Endothelial cell of umbilical vein (primary cell): ENCODE measurements at regions of chr2 and their contacts with region 1.

Region 1: GRCh38 chr2:20661067-20661980 is 5.6 kb upstream of the GDF7 start:
- DNase-seq: peak; percentile 80
- H3K4me3 ChIP-seq: no peak overlapping the region
- H3K27ac ChIP-seq: no peak overlapping the region
- H3K4me1 ChIP-seq: peaks cover 8% of the 10 kb centered on the region
- H3K27me3 ChIP-seq: peaks cover 57 to 64% of the 10 kb centered on the region in 2 experiments
- CTCF ChIP-seq: peak; percentile 88 to 92
- POLR2A ChIP-seq: peak; percentile 45

Region 2: GRCh38 chr2:20350753-20351554 is 310.4 kb before region 1 on chr2 and contains the start of gene PUM2:
- CTCF ChIA-PET with region 1: no interaction called
- POLR2A ChIA-PET with region 1: no interaction called
- dilution Hi-C with region 1: no loop called
- intact Hi-C with region 1: no loop called
- DNase-seq: peak; percentile 98
- H3K4me3 ChIP-seq: peak within 1 kb of the TSS; percentile 99 to 100 (median 100)
- H3K27ac ChIP-seq: peak within 1 kb of the TSS; percentile 88
- H3K4me1 ChIP-seq: peaks cover 31% of the 10 kb centered on the region
- H3K27me3 ChIP-seq: no peaks in the 10 kb centered on the region
- CTCF ChIP-seq: no peak
- POLR2A ChIP-seq: peak; percentile 92
- total RNA-seq, gene PUM2: 79.2 and 83.7 TPM in 2 replicates

Region 3: DNA sequence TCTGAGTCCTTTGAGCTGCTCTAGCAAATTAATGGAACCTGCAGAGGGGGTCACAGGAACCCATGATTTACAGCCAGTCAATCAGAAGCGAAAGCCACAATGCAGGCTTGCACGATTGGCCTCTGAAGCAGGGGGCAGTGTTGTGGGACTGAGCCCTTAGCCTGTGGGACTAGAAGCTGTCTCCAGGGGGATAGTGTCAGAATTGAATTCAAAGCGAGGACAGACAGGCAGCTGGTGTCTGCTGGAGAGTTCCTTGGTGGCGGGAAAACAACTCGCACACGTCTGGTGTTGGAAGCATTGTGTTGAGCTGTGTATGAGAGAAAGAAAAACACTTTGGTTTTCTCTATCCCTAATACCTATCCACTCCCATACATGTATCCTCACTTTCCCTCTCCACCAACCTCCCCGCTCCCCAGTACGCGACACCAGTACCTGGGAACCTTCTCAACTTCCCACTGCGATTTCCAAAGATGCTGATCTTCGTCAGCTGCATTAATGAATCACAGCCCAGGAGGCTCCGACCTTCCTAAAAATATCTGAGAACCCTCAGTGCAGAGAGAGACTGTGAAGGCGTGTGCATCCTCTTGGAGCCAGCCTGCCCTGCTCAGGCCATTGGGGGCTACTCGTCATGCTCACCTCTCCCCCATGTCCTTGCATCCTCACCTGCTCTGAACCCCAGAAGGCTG is 98.6 kb before region 1 on chr2:
- CTCF ChIA-PET with region 1: no interaction called
- POLR2A ChIA-PET with region 1: no interaction called
- dilution Hi-C with region 1: no loop called
- intact Hi-C with region 1: no loop called
- DNase-seq: no peak
- H3K4me3 ChIP-seq: no peak overlapping the region
- H3K27ac ChIP-seq: no peak overlapping the region
- H3K4me1 ChIP-seq: peaks cover 20% of the 10 kb centered on the region
- H3K27me3 ChIP-seq: no peaks in the 10 kb centered on the region
- CTCF ChIP-seq: peak in 1 of 2 donors; percentile 18
- POLR2A ChIP-seq: no peak

Region 4: GRCh38 chr2:20650880-20651730 is 10.2 kb before region 1 on chr2 and contains the start of gene HS1BP3:
- CTCF ChIA-PET with region 1: interaction called, 20 read pairs
- POLR2A ChIA-PET with region 1: no interaction called
- dilution Hi-C with region 1: no loop called
- intact Hi-C with region 1: no loop called
- DNase-seq: peak; percentile 77
- H3K4me3 ChIP-seq: peak within 1 kb of the TSS; percentile 50 to 95 (median 75)
- H3K27ac ChIP-seq: peak within 1 kb of the TSS; percentile 64
- H3K4me1 ChIP-seq: peaks cover 10% of the 10 kb centered on the region
- H3K27me3 ChIP-seq: peaks cover 9 to 10% of the 10 kb centered on the region in 2 experiments
- CTCF ChIP-seq: peak; percentile 73 to 96
- POLR2A ChIP-seq: peak; percentile 87
- total RNA-seq, gene HS1BP3: 27.8 and 33.1 TPM in 2 replicates

Region 5: GRCh38 chr2:20755132-20755800 is 93.9 kb after region 1 on chr2:
- CTCF ChIA-PET with region 1: interaction called, 40 read pairs
- POLR2A ChIA-PET with region 1: no interaction called
- dilution Hi-C with region 1: no loop called
- intact Hi-C with region 1: loop called (anchors 2 kb)
- DNase-seq: peak; percentile 52
- H3K4me3 ChIP-seq: no peak overlapping the region
- H3K27ac ChIP-seq: no peak overlapping the region
- H3K4me1 ChIP-seq: no peaks in the 10 kb centered on the region
- H3K27me3 ChIP-seq: no peaks in the 10 kb centered on the region
- CTCF ChIP-seq: peak in 1 of 2 donors; percentile 38
- POLR2A ChIP-seq: no peak

Region 6: GRCh38 chr2:20916604-20917286 is 255.4 kb after region 1 on chr2:
- CTCF ChIA-PET with region 1: interaction called, 21 read pairs
- POLR2A ChIA-PET with region 1: no interaction called
- dilution Hi-C with region 1: no loop called
- intact Hi-C with region 1: loop called (anchors 1 kb)
- DNase-seq: peak; percentile 20
- H3K4me3 ChIP-seq: no peak overlapping the region
- H3K27ac ChIP-seq: no peak overlapping the region
- H3K4me1 ChIP-seq: no peaks in the 10 kb centered on the region
- H3K27me3 ChIP-seq: no peaks in the 10 kb centered on the region
- CTCF ChIP-seq: peak in 1 of 2 donors; percentile 24
- POLR2A ChIP-seq: no peak

Region 7: GRCh38 chr2:20962939-20963557 is 301.7 kb after region 1 on chr2:
- CTCF ChIA-PET with region 1: interaction called, 531 read pairs
- POLR2A ChIA-PET with region 1: interaction called, 6 read pairs
- dilution Hi-C with region 1: no loop called
- intact Hi-C with region 1: loop called (anchors 1 kb)
- DNase-seq: peak; percentile 67
- H3K4me3 ChIP-seq: no peak overlapping the region
- H3K27ac ChIP-seq: no peak overlapping the region
- H3K4me1 ChIP-seq: no peaks in the 10 kb centered on the region
- H3K27me3 ChIP-seq: peaks cover 2 to 5% of the 10 kb centered on the region in 2 experiments
- CTCF ChIP-seq: peak; percentile 74 to 80
- POLR2A ChIP-seq: no peak

Region 8: DNA sequence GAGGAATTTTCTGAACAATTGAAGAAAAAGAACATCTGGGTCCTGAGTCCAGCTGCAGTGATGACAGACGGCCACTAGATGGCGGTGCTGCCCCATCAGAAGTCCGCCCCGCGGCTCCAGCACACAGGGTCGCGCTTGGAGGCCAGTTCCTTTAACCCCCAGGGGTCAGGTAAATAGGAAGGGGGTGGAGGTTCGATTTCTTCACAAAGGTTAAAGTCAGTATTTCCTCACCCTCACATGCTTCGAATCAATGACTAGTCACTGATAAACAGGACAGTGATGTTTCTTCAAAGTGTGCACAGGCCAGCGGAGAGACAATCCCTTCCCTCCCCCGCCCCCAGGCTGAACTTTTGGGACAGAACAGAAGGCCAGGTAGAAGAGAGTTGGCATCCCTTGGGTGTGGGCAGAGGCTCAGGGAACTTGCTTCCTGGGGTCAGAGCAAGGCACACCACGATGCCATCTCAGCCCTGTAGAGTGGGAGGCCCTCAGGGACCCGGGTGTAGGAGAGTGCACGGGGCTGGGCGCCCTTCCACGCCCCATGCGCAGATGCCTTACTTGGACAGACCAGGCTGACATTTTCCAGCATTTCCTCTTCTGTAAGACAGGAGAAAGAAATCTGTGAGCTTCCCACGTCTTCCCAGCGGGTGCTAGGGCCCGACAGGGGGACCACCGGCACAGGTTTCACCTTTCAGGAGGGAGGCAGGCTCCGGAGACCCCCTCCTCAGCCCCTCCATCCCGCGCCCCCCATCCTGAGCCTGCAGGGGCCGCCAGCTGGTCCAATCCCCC is 381.8 kb after region 1 on chr2:
- CTCF ChIA-PET with region 1: interaction called, 4 read pairs
- POLR2A ChIA-PET with region 1: no interaction called
- dilution Hi-C with region 1: no loop called
- intact Hi-C with region 1: loop called (anchors 1 kb)
- DNase-seq: peak; percentile 55
- H3K4me3 ChIP-seq: no peak overlapping the region
- H3K27ac ChIP-seq: no peak overlapping the region
- H3K4me1 ChIP-seq: no peaks in the 10 kb centered on the region
- H3K27me3 ChIP-seq: no peaks in the 10 kb centered on the region
- CTCF ChIP-seq: peak; percentile 91 to 92
- POLR2A ChIP-seq: no peak